Naive thymus-derived CD4-positive, alpha-beta T cell (primary cell): ENCODE measurements at regions of chr4 and their contacts with region 1.

Region 1: GRCh38 chr4:153142700-153143438 is 61.4 kb upstream of the TRIM2 start:
- DNase-seq: peak in 8 of 9 donors; percentile 39 to 71 (median 58)
- ATAC-seq: peak; percentile 76
- H3K4me3 ChIP-seq: no peak overlapping the region
- H3K4me3 Mint-ChIP-seq: no peak overlapping the region
- H3K27ac ChIP-seq: no peak overlapping the region
- H3K27ac Mint-ChIP-seq: no peak overlapping the region
- H3K4me1 ChIP-seq: no peaks in the 10 kb centered on the region
- H3K4me1 Mint-ChIP-seq: peaks cover 0 to 4% (median 0%) of the 10 kb centered on the region in 7 donors
- H3K27me3 ChIP-seq: no peaks in the 10 kb centered on the region
- H3K27me3 Mint-ChIP-seq: peaks cover 0 to 14% (median 0%) of the 10 kb centered on the region in 5 donors

Region 2: GRCh38 chr4:153153339-153153871 is 10.5 kb after region 1 on chr4:
- CTCF ChIA-PET with region 1: interaction called, 12 read pairs
- POLR2A ChIA-PET with region 1: no interaction called
- intact Hi-C with region 1: loop called (anchors 1 to 2 kb)
- DNase-seq: peak; percentile 53 to 84 (median 78)
- ATAC-seq: peak; percentile 95
- H3K4me3 ChIP-seq: peak overlapping the region; percentile 81
- H3K4me3 Mint-ChIP-seq: peak overlapping the region; percentile 91 to 96 (median 92)
- H3K27ac ChIP-seq: peak overlapping the region; percentile 69
- H3K27ac Mint-ChIP-seq: peak overlapping the region; percentile 78 to 90 (median 85)
- H3K4me1 ChIP-seq: peaks cover 3 to 12% of the 10 kb centered on the region in 2 donors
- H3K4me1 Mint-ChIP-seq: peaks cover 23 to 42% (median 38%) of the 10 kb centered on the region in 7 donors
- H3K27me3 ChIP-seq: no peaks in the 10 kb centered on the region
- H3K27me3 Mint-ChIP-seq: peaks cover 0 to 43% (median 0%) of the 10 kb centered on the region in 5 donors

Region 3: DNA sequence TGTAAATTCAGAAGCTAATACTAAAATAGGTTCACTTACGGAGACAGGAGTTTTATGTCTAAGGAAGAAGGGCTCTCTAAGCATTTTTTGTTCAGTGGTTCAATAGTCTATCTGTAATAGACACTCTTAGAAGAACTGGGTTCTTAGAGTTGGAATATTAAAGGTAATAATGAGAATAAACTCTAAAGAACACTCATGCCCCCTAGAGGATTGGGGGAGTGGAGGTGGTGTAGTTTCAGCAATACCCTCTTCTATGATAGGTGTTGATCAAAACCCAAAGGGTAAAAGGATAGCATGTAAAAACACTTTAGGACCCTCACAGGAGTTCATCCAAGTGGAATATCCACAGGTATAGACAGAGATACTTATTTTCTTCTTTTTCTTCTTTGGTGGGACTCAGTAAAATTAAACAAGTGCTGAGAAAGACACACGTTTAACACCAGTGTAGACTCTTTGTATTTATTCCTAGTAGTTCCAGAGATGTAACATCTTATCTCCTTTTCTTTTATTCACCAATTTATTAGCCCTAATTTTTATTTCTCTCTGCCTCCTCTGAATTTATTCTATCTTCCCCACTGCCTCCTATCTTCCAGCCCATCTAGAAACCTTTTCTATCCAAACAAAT is 175.9 kb after region 1 on chr4:
- CTCF ChIA-PET with region 1: interaction called, 18 read pairs
- POLR2A ChIA-PET with region 1: no interaction called
- intact Hi-C with region 1: loop called (anchors 1 kb)
- DNase-seq: peak in 6 of 9 donors; percentile 11 to 56 (median 44)
- ATAC-seq: peak; percentile 54
- H3K4me3 ChIP-seq: no peak overlapping the region
- H3K4me3 Mint-ChIP-seq: no peak overlapping the region
- H3K27ac ChIP-seq: no peak overlapping the region
- H3K27ac Mint-ChIP-seq: no peak overlapping the region
- H3K4me1 ChIP-seq: no peaks in the 10 kb centered on the region
- H3K4me1 Mint-ChIP-seq: no peaks in the 10 kb centered on the region
- H3K27me3 ChIP-seq: no peaks in the 10 kb centered on the region
- H3K27me3 Mint-ChIP-seq: no peaks in the 10 kb centered on the region

Region 4: DNA sequence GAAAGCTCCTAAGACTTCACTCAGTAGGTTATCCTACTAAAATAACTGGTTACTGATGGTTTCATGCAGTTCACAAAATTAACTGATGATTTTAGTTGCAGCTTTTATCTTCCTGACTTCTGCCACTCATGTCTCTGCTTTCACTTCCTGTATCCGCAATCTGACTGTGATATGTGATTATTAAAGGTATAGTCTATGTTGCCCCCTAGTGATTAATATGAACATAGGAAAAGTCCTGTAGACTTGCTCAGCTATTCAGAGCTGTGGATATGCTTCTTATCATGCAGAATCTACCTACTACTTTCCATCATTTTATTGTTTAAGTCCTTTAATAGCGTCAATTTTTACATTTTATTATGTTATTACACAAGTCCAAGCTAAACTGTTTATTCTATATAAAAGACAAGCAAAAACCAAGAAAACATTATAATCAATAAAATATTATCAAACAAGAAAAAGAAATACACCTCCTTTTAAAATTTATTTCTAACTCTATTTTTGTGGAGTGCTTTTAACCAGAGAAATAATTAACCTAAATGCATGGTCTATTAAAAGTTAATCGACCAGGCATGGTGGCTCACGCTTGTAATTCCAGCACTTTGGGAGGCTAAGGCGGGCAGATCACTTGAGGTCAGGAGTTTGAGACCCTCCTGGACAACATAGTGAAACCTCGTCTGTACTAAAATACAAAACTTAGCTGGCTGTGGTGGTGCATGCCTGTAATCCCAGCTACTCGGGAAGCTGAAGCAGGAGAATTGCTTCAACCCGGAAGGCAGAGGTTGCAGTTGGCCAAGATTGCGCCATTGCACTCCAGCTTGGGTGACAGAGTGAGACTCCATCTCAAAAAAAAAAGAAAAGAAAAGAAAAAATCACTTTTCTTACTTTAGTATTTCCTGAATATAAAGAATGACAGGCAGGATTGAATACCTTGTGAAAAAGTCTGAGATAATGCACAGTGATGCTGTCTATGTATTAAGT is 500.8 kb after region 1 on chr4:
- CTCF ChIA-PET with region 1: interaction called, 12 read pairs
- POLR2A ChIA-PET with region 1: no interaction called
- intact Hi-C with region 1: loop called (anchors 1 to 2 kb)
- DNase-seq: peak in 7 of 9 donors; percentile 25 to 73 (median 56)
- ATAC-seq: peak; percentile 91
- H3K4me3 ChIP-seq: no peak overlapping the region
- H3K4me3 Mint-ChIP-seq: peak overlapping the region in 6 of 10 donors; percentile 0 to 46 (median 22)
- H3K27ac ChIP-seq: no peak overlapping the region
- H3K27ac Mint-ChIP-seq: peak overlapping the region in 7 of 9 donors; percentile 0 to 69 (median 8)
- H3K4me1 ChIP-seq: no peaks in the 10 kb centered on the region
- H3K4me1 Mint-ChIP-seq: peaks cover 4 to 22% (median 18%) of the 10 kb centered on the region in 7 donors
- H3K27me3 ChIP-seq: no peaks in the 10 kb centered on the region
- H3K27me3 Mint-ChIP-seq: no peaks in the 10 kb centered on the region